Panc1 (cell line): ENCODE measurements at regions of chr5 and their contacts with region 1.

Region 1: DNA sequence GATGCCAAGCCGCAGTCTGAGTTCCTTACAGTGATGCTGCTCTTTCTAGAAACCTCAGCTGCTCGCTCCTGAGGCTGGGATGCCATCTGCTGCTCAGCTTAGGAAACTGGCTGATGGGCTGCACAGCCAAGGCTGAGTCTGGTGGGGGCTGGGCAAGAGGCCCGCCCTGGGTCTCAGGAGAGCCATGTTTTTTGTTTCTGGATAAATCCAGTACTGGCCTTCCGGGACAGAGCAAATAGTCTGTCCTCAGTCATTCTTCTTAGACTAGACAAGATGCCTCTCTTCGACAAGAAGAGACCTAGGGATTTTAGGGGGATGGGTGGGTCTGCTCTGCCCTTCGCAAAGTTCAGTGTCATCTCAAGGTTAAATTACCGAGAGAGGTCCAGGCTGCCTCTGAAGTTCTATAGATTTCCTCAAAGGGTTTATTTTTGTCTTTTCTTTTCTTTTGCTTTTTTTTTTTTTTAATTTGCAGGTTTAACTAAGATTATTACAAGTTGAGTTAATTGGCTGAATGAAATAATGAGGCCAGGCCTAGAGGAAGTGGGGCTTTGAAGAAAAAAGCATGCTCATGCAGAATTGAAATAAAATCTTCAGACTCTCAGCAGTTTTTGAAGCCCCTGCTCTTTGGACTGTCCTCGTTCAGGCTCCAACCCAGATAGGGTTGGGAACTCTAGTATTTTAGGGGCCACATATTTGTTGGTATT is 30.6 kb upstream of the MATR3 start:
- DNase-seq: peak; percentile 71
- ATAC-seq: peak; percentile 100
- H3K4me3 ChIP-seq: no peak overlapping the region
- H3K27ac ChIP-seq: no peak overlapping the region
- H3K4me1 ChIP-seq: 0 out of 2 replicates have a peak, but pooled peaks cover 3% of the 10 kb centered on the region
- H3K27me3 ChIP-seq: no peaks in the 10 kb centered on the region
- CTCF ChIP-seq: peak; percentile 97

Region 2: GRCh38 chr5:138932171-138932810 is 330.6 kb before region 1 on chr5:
- CTCF ChIA-PET with region 1: no interaction called
- POLR2A ChIA-PET with region 1: no interaction called
- in situ Hi-C with region 1: no loop called
- intact Hi-C with region 1: loop called (anchors 10 kb)
- DNase-seq: no peak
- ATAC-seq: no peak
- H3K4me3 ChIP-seq: no peak overlapping the region
- H3K27ac ChIP-seq: no peak overlapping the region
- H3K4me1 ChIP-seq: no peaks in the 10 kb centered on the region
- H3K27me3 ChIP-seq: no peaks in the 10 kb centered on the region
- CTCF ChIP-seq: no peak; the same call in 1 of the 2 replicates